ENCODE measurements at regions of chr9 and their contacts with region 1.

Region 1: GRCh38 chr9:4679268-4680172 is at the start of gene CDC37L1:
- DNase-seq: peak; percentile 99
- H3K4me3 ChIP-seq: peak within 1 kb of the TSS; percentile 60 to 80 (median 74)
- H3K27ac ChIP-seq: peak within 1 kb of the TSS; percentile 96 to 99 (median 97)
- H3K4me1 ChIP-seq: peaks cover 18 to 29% (median 22%) of the 10 kb centered on the region in 4 donors
- H3K27me3 ChIP-seq: no peaks in the 10 kb centered on the region
- CTCF ChIP-seq: peak; percentile 73 to 98 (median 75)
- EP300 ChIP-seq: no peak
- POLR2A ChIP-seq: peak; percentile 98
- total RNA-seq, gene CDC37L1: 12.0 to 28.7 (median 20.0) TPM

Region 2: GRCh38 chr9:4662108-4662988 is 17.2 kb before region 1 on chr9 and contains the start of gene PLPP6:
- in situ Hi-C with region 1: no loop called
- intact Hi-C with region 1: loop called (anchors 2 kb)
- DNase-seq: peak; percentile 93
- H3K4me3 ChIP-seq: peak within 1 kb of the TSS; percentile 62 to 99 (median 82)
- H3K27ac ChIP-seq: peak within 1 kb of the TSS; percentile 87 to 94 (median 92)
- H3K4me1 ChIP-seq: peaks cover 3 to 54% (median 30%) of the 10 kb centered on the region in 4 donors
- H3K27me3 ChIP-seq: no peaks in the 10 kb centered on the region
- CTCF ChIP-seq: peak; percentile 46 to 71 (median 55)
- EP300 ChIP-seq: no peak
- POLR2A ChIP-seq: peak; percentile 87
- total RNA-seq, gene PLPP6: 7.1 to 22.7 (median 16.3) TPM

Region 3: DNA sequence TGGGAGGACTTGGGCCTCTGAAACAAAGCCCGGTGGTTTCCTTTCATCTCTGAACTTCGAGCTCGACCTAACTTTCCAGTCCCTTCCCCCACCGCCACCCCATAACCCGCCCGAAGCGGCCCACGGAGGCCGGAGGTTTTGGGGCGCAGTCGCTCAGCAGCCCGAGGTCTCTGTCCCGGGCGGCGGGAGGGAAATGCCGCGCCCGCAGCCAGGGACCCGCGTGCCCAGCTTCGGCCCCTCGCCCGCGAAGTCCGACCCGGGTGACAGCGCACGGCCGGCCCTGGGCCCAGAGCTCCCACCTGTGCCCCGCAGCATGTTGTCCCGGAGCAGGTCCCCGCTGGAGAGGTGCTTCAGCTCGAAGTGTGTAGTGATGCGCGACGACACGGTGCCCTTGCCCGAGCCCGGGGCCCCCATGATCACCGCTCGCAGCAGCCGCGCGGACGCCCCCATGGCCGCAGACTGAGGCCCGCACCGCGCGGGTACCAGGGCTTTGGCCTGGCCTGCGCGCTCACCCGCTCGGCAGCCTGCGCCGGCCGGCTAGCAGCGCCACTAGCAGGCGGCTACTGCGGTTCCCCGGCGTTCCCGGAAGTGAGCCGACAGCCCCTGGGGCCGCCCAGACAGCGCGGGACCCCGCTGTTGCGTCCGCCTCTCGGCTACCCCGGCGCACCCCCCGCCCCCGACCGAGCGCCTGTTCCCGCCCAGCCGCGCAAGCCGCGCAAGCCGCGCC is 61.3 kb after region 1 on chr9 and contains the start of gene AK3:
- in situ Hi-C with region 1: loop called in 2 of 4 experiments (anchors 10 kb)
- intact Hi-C with region 1: loop called (anchors 1 kb)
- DNase-seq: peak; percentile 93
- H3K4me3 ChIP-seq: peak within 1 kb of the TSS; percentile 54 to 84 (median 81)
- H3K27ac ChIP-seq: peak within 1 kb of the TSS; percentile 93 to 98 (median 96)
- H3K4me1 ChIP-seq: peaks cover 18 to 33% (median 24%) of the 10 kb centered on the region in 4 donors
- H3K27me3 ChIP-seq: no peaks in the 10 kb centered on the region
- CTCF ChIP-seq: peak in 1 of 5 experiments; percentile 23
- EP300 ChIP-seq: no peak
- POLR2A ChIP-seq: peak; percentile 91
- total RNA-seq, gene AK3: 25.9 to 121 (median 82.3) TPM

Region 4: GRCh38 chr9:6008169-6008979 is 1328.9 kb after region 1 on chr9:
- in situ Hi-C with region 1: loop called in 1 of 4 experiments (anchors 25 kb)
- intact Hi-C with region 1: no loop called
- DNase-seq: peak; percentile 96
- H3K4me3 ChIP-seq: peak overlapping the region; percentile 88 to 100 (median 93)
- H3K27ac ChIP-seq: peak overlapping the region; percentile 98 to 100 (median 99)
- H3K4me1 ChIP-seq: peaks cover 0 to 52% (median 15%) of the 10 kb centered on the region in 4 donors
- H3K27me3 ChIP-seq: no peaks in the 10 kb centered on the region
- CTCF ChIP-seq: no peak
- EP300 ChIP-seq: no peak
- POLR2A ChIP-seq: peak; percentile 63

Measured in transverse colon (tissue), 4 donors.